Activated CD4-positive, alpha-beta T cell treated with anti-CD3 and anti-CD28 coated beads, Interleukin-2, amount 10 ng/mL, durations not matched to agents 24 days and 14 days (primary cell): ENCODE measurements at regions of chr16 and their contacts with region 1.

Region 1: GRCh38 chr16:68448360-68448970 is at the start of gene SMPD3:
- DNase-seq: peak; percentile 99
- H3K4me3 Mint-ChIP-seq: peak within 1 kb of the TSS; percentile 77
- H3K27ac Mint-ChIP-seq: peak within 1 kb of the TSS; percentile 60
- H3K4me1 Mint-ChIP-seq: peaks cover 11% of the 10 kb centered on the region
- H3K27me3 Mint-ChIP-seq: peaks cover 29% of the 10 kb centered on the region
- total RNA-seq, gene SMPD3: 0.09 and 0.40 TPM in 2 replicates

Region 2: GRCh38 chr16:67993189-67994039 is 455.1 kb before region 1 on chr16:
- intact Hi-C with region 1: no loop called
- DNase-seq: peak; percentile 95
- H3K4me3 Mint-ChIP-seq: peak overlapping the region; percentile 86
- H3K27ac Mint-ChIP-seq: peak overlapping the region; percentile 96
- H3K4me1 Mint-ChIP-seq: peaks cover 29% of the 10 kb centered on the region
- H3K27me3 Mint-ChIP-seq: no peaks in the 10 kb centered on the region

Region 3: DNA sequence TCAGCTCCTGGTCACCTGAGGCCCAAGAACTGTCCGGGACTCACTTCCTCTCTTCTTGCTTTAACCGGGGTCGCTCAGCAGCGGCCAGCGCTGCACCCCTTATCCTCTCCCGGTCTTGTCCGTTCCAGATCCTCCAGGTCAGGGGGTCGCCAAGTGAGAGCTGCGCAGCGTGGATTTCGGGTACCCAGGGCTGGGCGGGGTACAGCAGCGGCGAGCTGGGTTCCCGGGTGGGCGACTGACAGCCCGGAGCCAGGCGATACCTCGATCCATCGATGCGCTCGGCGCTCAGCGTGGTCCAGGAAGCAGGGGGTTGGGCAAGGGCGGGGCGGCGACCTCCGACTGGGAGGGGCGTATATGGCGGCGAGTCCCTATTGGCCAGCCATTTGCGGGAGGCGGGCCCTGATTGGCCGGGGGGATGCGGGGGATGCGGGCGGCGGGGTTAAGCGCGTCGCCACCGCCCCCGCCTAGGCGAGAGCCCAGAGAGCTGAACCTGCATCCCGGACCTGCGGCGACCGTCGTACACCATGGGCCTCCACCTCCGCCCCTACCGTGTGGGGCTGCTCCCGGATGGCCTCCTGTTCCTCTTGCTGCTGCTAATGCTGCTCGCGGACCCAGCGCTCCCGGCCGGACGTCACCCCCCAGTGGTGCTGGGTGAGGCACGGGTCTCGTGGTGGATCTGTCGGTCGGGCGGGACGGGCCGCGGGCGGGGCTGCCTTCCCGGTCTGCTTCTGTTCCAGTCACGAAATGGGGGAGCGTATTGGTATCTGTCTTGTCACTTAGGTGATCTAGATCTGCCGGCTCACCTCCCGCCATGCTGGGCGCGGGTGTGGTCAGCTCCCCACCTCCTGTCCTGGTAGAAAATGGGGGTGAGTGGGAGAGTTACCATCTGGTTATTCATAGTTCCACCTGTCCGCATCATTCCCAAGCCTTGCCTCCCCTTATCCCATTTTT is 203.3 kb before region 1 on chr16 and contains the start of gene PLA2G15:
- intact Hi-C with region 1: loop called (anchors 2 kb)
- DNase-seq: peak; percentile 98
- H3K4me3 Mint-ChIP-seq: peak within 1 kb of the TSS; percentile 100
- H3K27ac Mint-ChIP-seq: peak within 1 kb of the TSS; percentile 85
- H3K4me1 Mint-ChIP-seq: peaks cover 23% of the 10 kb centered on the region
- H3K27me3 Mint-ChIP-seq: peaks cover 2% of the 10 kb centered on the region
- total RNA-seq, gene PLA2G15: 7.2 and 8.4 TPM in 2 replicates

Region 4: GRCh38 chr16:68470461-68471150 is 22.1 kb after region 1 on chr16:
- intact Hi-C with region 1: loop called (anchors 1 kb)
- DNase-seq: no peak
- H3K4me3 Mint-ChIP-seq: peak overlapping the region; percentile 70
- H3K27ac Mint-ChIP-seq: peak overlapping the region; percentile 81
- H3K4me1 Mint-ChIP-seq: peaks cover 21% of the 10 kb centered on the region
- H3K27me3 Mint-ChIP-seq: peaks cover 10% of the 10 kb centered on the region

Region 5: GRCh38 chr16:68490829-68491575 is 42.5 kb after region 1 on chr16:
- intact Hi-C with region 1: no loop called
- DNase-seq: no peak
- H3K4me3 Mint-ChIP-seq: no peak overlapping the region
- H3K27ac Mint-ChIP-seq: no peak overlapping the region
- H3K4me1 Mint-ChIP-seq: no peaks in the 10 kb centered on the region
- H3K27me3 Mint-ChIP-seq: peaks cover 4% of the 10 kb centered on the region

Region 6: DNA sequence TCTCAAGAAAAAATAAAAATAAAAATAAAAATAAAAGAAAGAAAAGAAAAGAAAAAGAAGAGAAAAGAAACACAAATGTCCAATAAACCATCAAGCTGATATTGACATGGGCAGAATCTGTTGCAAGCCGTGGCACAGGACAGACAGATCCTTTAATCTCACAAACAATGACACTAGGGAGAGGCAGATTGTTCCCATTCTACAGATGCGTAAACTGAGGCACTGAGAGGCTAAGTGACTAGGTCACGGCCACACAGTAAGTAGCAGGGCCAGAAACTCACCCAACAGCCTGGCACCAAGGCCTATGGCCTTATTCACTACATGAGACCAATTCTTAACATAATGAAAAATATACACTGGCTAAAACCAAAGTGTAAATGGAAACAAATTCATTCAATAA is 62.3 kb after region 1 on chr16:
- intact Hi-C with region 1: loop called (anchors 1 kb)
- DNase-seq: no peak
- H3K4me3 Mint-ChIP-seq: no peak overlapping the region
- H3K27ac Mint-ChIP-seq: no peak overlapping the region
- H3K4me1 Mint-ChIP-seq: peaks cover 2% of the 10 kb centered on the region
- H3K27me3 Mint-ChIP-seq: peaks cover 30% of the 10 kb centered on the region

Region 7: GRCh38 chr16:68676113-68676860 is 227.8 kb after region 1 on chr16:
- intact Hi-C with region 1: no loop called
- DNase-seq: no peak
- H3K4me3 Mint-ChIP-seq: no peak overlapping the region
- H3K27ac Mint-ChIP-seq: no peak overlapping the region
- H3K4me1 Mint-ChIP-seq: no peaks in the 10 kb centered on the region
- H3K27me3 Mint-ChIP-seq: no peaks in the 10 kb centered on the region